ENCODE measurements at regions of chr1 and their contacts with region 1.

Region 1: GRCh38 chr1:201937624-201938213 is 8.6 kb downstream of the LMOD1 start:
- DNase-seq: no peak
- ATAC-seq: no peak
- H3K4me3 Mint-ChIP-seq: no peak overlapping the region
- H3K27ac Mint-ChIP-seq: no peak overlapping the region
- H3K4me1 Mint-ChIP-seq: no peaks in the 10 kb centered on the region
- H3K27me3 Mint-ChIP-seq: peaks cover 8% of the 10 kb centered on the region

Region 2: GRCh38 chr1:201861448-201861847 is 76.3 kb before region 1 on chr1:
- CTCF ChIA-PET with region 1: interaction called, 11 read pairs
- POLR2A ChIA-PET with region 1: no interaction called
- intact Hi-C with region 1: no loop called
- DNase-seq: no peak
- ATAC-seq: no peak
- H3K4me3 Mint-ChIP-seq: no peak overlapping the region
- H3K27ac Mint-ChIP-seq: no peak overlapping the region
- H3K4me1 Mint-ChIP-seq: no peaks in the 10 kb centered on the region
- H3K27me3 Mint-ChIP-seq: no peaks in the 10 kb centered on the region